Heart right ventricle (tissue), 16 donors: ENCODE measurements at regions of chr6 and their contacts with region 1.

Region 1: GRCh38 chr6:166488076-166488685 is 98.3 kb downstream of the RAMACL start:
- DNase-seq: peak; percentile 63 to 71
- ATAC-seq: peak; percentile 58 to 91 (median 80)
- H3K4me3 ChIP-seq: peak overlapping the region in 2 of 10 donors; percentile 2 to 5
- H3K27ac ChIP-seq: peak overlapping the region; percentile 18 to 88 (median 59)
- H3K4me1 ChIP-seq: peaks cover 6 to 38% (median 29%) of the 10 kb centered on the region in 9 donors
- H3K27me3 ChIP-seq: no peaks in the 10 kb centered on the region
- CTCF ChIP-seq: no peak

Region 2: GRCh38 chr6:166275714-166276166 is 212.4 kb before region 1 on chr6:
- intact Hi-C with region 1: no loop called
- DNase-seq: peak; percentile 32 to 75
- ATAC-seq: peak; percentile 72 to 86 (median 80)
- H3K4me3 ChIP-seq: no peak overlapping the region
- H3K27ac ChIP-seq: no peak overlapping the region
- H3K4me1 ChIP-seq: peaks cover 0 to 6% (median 0%) of the 10 kb centered on the region in 9 donors
- H3K27me3 ChIP-seq: peaks cover 0 to 24% (median 12%) of the 10 kb centered on the region in 7 donors
- CTCF ChIP-seq: peak in 8 of 9 donors; percentile 94 to 100 (median 98)

Region 3: GRCh38 chr6:166325383-166326042 is 162.7 kb before region 1 on chr6:
- intact Hi-C with region 1: no loop called
- DNase-seq: no peak
- ATAC-seq: no peak
- H3K4me3 ChIP-seq: no peak overlapping the region
- H3K27ac ChIP-seq: no peak overlapping the region
- H3K4me1 ChIP-seq: peaks cover 0 to 8% (median 6%) of the 10 kb centered on the region in 9 donors
- H3K27me3 ChIP-seq: no peaks in the 10 kb centered on the region
- CTCF ChIP-seq: no peak

Region 4: DNA sequence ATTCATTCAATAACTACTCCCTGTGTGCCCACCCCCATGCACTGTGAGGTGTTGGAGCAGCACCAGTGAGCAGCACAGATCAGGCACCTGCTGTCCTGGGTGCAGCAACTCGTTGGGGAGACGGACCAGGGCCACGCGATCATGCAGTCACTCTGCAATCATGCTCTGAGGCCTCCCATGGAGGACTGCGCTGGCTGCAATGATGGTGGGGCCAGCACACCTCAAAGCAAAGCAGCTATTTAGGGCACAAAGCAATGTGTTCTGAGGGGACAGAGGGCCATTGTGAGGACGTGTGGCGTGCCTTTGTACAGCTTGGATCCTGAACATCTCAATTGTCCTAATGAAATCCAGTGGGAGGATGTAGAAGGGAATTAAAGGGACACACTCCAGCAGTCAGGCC is 64.4 kb before region 1 on chr6:
- intact Hi-C with region 1: no loop called
- DNase-seq: no peak
- ATAC-seq: no peak
- H3K4me3 ChIP-seq: no peak overlapping the region
- H3K27ac ChIP-seq: no peak overlapping the region
- H3K4me1 ChIP-seq: peaks cover 0 to 10% (median 0%) of the 10 kb centered on the region in 9 donors
- H3K27me3 ChIP-seq: no peaks in the 10 kb centered on the region
- CTCF ChIP-seq: no peak

Region 5: DNA sequence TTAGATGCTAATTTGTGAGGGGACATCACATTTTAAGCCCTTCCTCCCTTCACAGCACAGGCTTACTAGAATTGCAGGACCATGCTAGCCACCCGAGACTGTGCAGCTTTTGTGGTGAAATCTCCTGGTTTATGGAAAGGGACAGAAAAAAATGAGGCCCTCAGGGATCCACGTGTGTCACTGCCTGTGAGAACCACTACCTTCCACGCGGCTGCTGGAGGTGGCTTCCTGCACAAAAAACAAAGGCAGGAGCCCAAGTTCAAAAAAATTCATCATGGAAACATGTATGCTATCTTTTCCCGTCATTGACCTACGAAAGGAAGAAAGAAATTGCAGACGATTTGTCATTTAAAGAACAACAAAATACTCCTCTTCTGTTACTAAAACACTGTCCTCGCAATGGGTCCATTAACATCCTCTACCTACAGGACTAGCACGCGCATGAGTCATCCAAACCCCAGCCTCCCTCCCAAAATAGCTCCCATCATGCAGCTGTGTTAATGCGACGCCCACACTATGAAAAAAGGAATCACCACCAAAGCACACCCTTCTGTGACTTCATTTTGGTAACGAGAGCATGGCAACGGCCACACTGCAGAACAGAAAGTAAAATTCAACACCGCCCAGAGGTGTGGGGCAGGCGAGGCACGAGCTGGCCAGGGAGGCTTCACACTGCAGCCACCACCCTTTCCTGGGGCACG is 52.6 kb after region 1 on chr6:
- intact Hi-C with region 1: loop called in 1 of 10 experiments (anchors 10 kb)
- DNase-seq: peak in 1 of 2 donors; percentile 54
- ATAC-seq: peak; percentile 61 to 91 (median 81)
- H3K4me3 ChIP-seq: peak overlapping the region in 6 of 10 donors; percentile 25 to 38 (median 29)
- H3K27ac ChIP-seq: peak overlapping the region; percentile 24 to 77 (median 59)
- H3K4me1 ChIP-seq: peaks cover 0 to 39% (median 25%) of the 10 kb centered on the region in 9 donors
- H3K27me3 ChIP-seq: no peaks in the 10 kb centered on the region
- CTCF ChIP-seq: no peak

Region 6: DNA sequence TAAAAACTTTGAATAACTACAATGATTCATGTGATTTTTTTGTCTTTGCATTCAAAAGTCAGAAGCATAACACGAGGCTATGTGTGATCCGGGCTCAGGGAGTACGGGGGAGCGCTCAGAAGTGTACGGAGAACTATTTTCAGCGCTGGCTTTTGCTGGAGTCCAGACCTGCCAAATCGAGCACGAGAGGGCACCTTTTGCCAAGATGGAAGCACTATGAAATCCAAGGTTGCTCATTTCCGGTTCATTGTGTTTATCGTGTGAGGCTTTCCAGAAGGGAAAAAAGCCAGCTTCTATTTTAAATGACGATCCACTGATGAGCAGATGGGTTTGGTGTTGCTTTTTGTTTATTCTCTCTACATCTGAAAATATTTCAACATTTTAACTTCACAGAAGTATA is 87.0 kb after region 1 on chr6:
- intact Hi-C with region 1: no loop called
- DNase-seq: peak; percentile 35 to 75
- ATAC-seq: peak; percentile 49 to 97 (median 92)
- H3K4me3 ChIP-seq: peak overlapping the region in 3 of 10 donors; percentile 4 to 23 (median 15)
- H3K27ac ChIP-seq: peak overlapping the region in 9 of 10 donors; percentile 5 to 75 (median 61)
- H3K4me1 ChIP-seq: peaks cover 0 to 44% (median 30%) of the 10 kb centered on the region in 9 donors
- H3K27me3 ChIP-seq: no peaks in the 10 kb centered on the region
- CTCF ChIP-seq: peak in 2 of 9 donors; percentile 22 to 23